ENCODE measurements at regions of chr11 and their contacts with region 1.

Region 1: GRCh38 chr11:1694064-1694845 is 2.7 kb upstream of the KRTAP5-6 start:
- DNase-seq: peak; percentile 84
- ATAC-seq: peak; percentile 91
- H3K4me3 Mint-ChIP-seq: no peak overlapping the region
- H3K27ac Mint-ChIP-seq: no peak overlapping the region
- H3K4me1 Mint-ChIP-seq: peaks cover 9% of the 10 kb centered on the region
- H3K27me3 Mint-ChIP-seq: peaks cover 57% of the 10 kb centered on the region

Region 2: DNA sequence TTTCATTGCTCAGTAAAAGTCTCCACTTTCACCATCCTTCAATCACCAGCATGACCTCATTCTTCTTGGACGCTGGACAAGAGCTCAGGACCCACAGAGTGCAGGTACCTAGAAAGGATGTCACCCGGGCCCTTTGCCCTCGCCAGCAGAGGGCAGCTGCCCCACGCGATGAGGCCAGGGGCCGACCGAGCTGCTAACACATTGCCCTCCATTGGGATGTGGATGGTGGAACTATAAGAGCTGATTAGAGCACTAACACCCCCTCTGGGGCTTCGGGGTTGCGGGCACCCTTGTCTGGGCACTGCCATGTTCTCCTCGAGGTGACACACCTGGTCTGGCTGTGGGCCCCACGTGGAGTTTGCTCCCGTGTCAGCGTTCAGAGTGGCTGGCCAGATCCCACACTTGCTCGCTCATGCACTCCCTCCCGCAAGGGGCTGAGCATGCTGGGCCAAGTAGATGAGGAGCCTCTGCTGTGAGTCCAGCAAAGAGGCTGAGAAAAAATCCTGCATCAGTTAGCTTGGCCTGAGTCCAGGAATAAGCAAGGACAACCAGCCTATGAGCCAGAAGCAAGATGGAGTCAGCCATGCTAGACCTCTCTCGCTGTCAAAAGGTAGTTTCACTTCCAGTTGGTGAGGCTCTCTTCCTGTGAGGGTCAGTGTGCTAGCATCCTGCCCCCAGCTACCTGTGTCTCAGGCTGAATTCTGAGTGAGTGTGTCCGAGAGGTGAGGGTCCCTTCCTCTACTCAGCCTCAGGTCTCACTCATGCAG is 12.6 kb after region 1 on chr11:
- CTCF ChIA-PET with region 1: interaction called, 54 read pairs
- DNase-seq: peak; percentile 48
- ATAC-seq: peak; percentile 39
- H3K4me3 Mint-ChIP-seq: no peak overlapping the region
- H3K27ac Mint-ChIP-seq: no peak overlapping the region
- H3K4me1 Mint-ChIP-seq: peaks cover 29% of the 10 kb centered on the region
- H3K27me3 Mint-ChIP-seq: peaks cover 40% of the 10 kb centered on the region

Region 3: GRCh38 chr11:1763336-1763795 is 69.1 kb after region 1 on chr11:
- CTCF ChIA-PET with region 1: interaction called, 26 read pairs
- DNase-seq: peak; percentile 53
- ATAC-seq: peak; percentile 17
- H3K4me3 Mint-ChIP-seq: peak overlapping the region; percentile 63
- H3K27ac Mint-ChIP-seq: peak overlapping the region; percentile 28
- H3K4me1 Mint-ChIP-seq: peaks cover 47% of the 10 kb centered on the region
- H3K27me3 Mint-ChIP-seq: no peaks in the 10 kb centered on the region

Region 4: DNA sequence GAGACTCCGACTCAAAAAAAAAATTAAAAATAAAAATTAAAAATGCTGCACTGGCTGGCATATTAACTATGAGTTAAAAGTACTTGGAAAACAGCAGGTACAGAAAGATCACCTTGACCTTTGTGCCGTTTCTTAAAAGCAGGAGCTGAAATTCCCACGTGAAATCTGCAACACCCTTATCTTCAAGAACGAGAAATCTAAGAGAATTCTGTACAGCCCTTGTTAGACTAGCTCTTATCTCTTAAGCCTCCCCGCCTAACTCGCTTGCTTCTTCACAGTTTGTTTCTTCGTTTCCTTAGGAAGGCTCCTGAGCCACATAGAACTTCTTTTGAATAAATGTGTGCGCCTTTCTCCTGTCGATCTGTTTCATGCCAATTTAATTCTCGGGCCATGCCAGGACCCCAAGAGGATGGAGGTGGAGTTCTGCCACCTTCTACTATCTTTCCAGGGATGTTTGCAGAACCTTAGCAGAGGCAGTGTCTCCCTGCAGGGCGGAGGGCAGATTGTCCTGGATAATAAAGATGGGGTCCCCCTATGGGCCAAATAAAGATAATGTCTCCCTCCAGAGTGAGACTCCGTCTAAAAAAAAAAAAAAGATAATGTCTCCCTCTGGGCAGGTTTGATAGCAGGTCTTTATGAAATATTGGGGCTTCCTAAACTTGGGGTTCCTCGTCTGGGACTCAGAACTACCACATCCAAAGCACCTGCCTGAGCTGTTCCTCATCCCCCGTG is 113.2 kb after region 1 on chr11:
- CTCF ChIA-PET with region 1: interaction called, 40 read pairs
- DNase-seq: no peak
- ATAC-seq: no peak
- H3K4me3 Mint-ChIP-seq: no peak overlapping the region
- H3K27ac Mint-ChIP-seq: no peak overlapping the region
- H3K4me1 Mint-ChIP-seq: no peaks in the 10 kb centered on the region
- H3K27me3 Mint-ChIP-seq: peaks cover 43% of the 10 kb centered on the region

Region 5: DNA sequence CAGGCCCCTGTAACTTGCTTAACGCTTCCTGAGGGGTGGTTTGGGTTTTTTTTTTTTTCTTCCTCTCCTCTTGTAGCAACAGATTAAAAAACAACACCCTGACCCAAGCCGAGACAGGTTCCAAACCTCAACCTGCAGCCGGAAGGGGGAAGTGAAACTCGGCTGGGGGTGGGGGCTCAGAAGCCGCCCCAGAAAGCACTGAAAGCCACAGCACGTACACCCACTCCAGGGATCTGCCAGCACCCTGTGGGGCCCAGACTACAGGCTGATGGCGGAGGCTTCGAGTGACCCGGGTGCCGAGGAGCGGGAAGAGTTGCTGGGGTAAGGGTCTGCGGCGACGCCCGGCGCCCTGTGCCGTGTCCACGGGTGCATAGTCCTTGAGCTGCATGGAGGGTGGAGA is 158.6 kb after region 1 on chr11 and contains the start of gene LSP1:
- CTCF ChIA-PET with region 1: interaction called, 39 read pairs
- DNase-seq: peak; percentile 95
- ATAC-seq: peak; percentile 59
- H3K4me3 Mint-ChIP-seq: peak within 1 kb of the TSS; percentile 99
- H3K27ac Mint-ChIP-seq: peak within 1 kb of the TSS; percentile 99
- H3K4me1 Mint-ChIP-seq: peaks cover 55% of the 10 kb centered on the region
- H3K27me3 Mint-ChIP-seq: no peaks in the 10 kb centered on the region
- total RNA-seq, gene LSP1: 574 to 702 TPM

Region 6: DNA sequence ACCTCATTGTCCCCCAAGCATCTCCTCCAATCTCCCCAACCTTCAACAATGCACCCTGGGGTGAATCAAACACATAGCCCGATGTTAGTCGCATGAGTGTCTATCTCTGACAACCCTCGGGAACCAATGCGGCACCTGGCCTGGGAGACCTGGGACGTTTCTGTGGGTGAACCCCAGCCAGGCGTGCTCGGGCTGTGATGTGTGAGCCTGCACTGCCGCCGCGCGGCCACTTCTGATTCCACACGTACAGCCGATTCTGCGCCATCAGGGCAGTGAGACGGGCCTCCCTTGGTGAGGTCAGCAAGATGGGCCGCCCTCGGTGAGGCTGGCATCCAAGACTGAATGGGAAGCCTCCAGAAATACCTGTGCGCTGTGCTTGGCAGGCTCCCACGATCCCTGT is 308.6 kb after region 1 on chr11:
- CTCF ChIA-PET with region 1: interaction called, 59 read pairs
- DNase-seq: no peak
- ATAC-seq: peak; percentile 74
- H3K4me3 Mint-ChIP-seq: no peak overlapping the region
- H3K27ac Mint-ChIP-seq: no peak overlapping the region
- H3K4me1 Mint-ChIP-seq: no peaks in the 10 kb centered on the region
- H3K27me3 Mint-ChIP-seq: no peaks in the 10 kb centered on the region